ENCODE measurements at regions of chrX and their contacts with region 1.

Region 1: DNA sequence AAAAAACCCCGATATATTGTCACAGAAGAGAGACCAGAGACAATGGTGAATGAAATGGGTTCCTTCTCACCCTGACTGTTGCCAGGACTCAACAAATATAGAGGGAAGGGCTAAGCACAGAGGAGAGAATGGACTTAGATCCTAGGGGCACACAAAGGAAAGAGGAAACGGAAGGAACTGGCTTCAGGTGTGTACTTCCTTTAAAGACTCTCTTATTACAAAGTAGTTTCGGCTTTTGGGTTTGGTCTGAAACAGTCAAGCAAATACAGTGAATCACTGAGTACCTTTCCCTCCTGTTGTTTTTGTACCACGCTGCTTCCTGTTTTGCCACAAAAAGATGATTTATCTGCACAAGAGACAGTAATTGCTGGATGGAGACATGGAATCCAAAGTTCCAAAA is 46.1 kb upstream of the S100G start:
- DNase-seq: peak; percentile 9
- H3K4me3 Mint-ChIP-seq: peak overlapping the region; percentile 10
- H3K27ac Mint-ChIP-seq: peak overlapping the region; percentile 84
- H3K4me1 Mint-ChIP-seq: peaks cover 28% of the 10 kb centered on the region
- H3K27me3 Mint-ChIP-seq: no peaks in the 10 kb centered on the region

Region 2: DNA sequence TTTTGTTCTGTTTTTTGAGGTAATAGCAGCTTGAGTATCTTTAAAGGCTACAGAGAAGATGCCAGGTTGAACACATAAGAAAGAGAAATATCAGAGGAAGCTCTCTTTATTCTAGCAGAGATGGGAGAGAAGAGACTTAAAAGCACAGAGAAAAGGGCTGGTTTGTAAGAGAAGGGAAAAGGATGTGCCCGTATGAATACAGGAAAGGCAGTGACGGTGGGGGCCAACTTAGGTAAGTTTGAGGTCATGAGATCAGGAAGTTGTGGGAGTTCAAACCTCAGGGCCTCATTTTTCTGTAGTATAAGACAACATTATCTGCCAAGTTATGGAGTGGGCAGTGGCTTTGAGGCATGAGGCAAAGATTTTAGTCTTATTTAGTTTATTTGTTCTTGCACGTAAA is 75.2 kb before region 1 on chrX:
- CTCF ChIA-PET with region 1: no interaction called
- POLR2A ChIA-PET with region 1: no interaction called
- intact Hi-C with region 1: loop called (anchors 10 kb)
- DNase-seq: peak; percentile 63
- H3K4me3 Mint-ChIP-seq: no peak overlapping the region
- H3K27ac Mint-ChIP-seq: peak overlapping the region; percentile 89
- H3K4me1 Mint-ChIP-seq: peaks cover 30% of the 10 kb centered on the region
- H3K27me3 Mint-ChIP-seq: no peaks in the 10 kb centered on the region

Region 3: DNA sequence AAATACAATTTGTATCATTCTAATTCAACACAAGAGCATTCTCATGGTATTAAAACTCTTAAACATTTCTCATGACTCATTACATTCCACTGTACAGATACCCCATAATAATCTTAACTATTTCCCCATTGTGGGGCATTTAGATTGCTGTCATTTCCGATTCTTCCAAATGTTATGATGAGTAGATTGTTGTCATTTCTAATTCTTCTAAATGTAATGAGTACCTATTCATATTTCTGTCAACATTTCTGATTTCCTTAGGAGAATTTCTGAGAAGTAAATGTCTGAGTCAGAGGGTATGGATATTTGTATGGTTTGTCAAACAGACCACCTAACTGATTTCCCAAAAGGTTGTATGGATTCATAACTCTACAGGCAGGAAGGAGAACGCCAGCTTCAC is 54.5 kb after region 1 on chrX:
- CTCF ChIA-PET with region 1: no interaction called
- POLR2A ChIA-PET with region 1: no interaction called
- intact Hi-C with region 1: no loop called
- DNase-seq: no peak
- H3K4me3 Mint-ChIP-seq: no peak overlapping the region
- H3K27ac Mint-ChIP-seq: no peak overlapping the region
- H3K4me1 Mint-ChIP-seq: no peaks in the 10 kb centered on the region
- H3K27me3 Mint-ChIP-seq: no peaks in the 10 kb centered on the region

Measured in activated CD4-positive, alpha-beta memory T cell treated with anti-CD3 and anti-CD28 coated beads for 36 hours (primary cell).